Naive thymus-derived CD8-positive, alpha-beta T cell (primary cell): ENCODE measurements at regions of chr11 and their contacts with region 1.

Region 1: GRCh38 chr11:83071567-83072349 is at the start of gene RAB30:
- DNase-seq: peak; percentile 70 to 98 (median 94)
- ATAC-seq: peak; percentile 94 to 95
- H3K4me3 Mint-ChIP-seq: no peak within 1 kb of the TSS
- H3K27ac Mint-ChIP-seq: no peak within 1 kb of the TSS
- H3K4me1 Mint-ChIP-seq: peaks cover 9 to 43% (median 26%) of the 10 kb centered on the region in 4 donors
- H3K27me3 Mint-ChIP-seq: no peaks in the 10 kb centered on the region
- polyA plus RNA-seq, gene RAB30: 10.7 to 17.4 (median 12.8) TPM

Region 2: DNA sequence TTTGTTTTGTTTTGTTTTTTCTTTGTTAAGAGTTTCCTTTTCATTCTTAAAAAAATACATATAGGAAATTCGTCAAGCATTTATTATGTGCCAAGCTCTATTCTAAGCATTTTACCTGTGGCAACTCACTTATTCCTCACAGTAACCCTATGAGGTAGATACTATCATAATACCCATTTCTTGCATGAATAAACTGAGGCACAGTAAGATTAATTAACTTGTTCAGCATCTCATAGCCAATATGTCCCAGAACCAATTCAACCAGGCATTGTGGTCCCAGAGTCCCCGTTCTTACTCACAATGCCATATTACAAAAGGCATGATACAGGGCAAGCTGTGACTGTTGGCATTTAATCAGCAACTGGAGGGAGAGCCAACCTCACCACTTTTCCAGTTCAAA is 83.8 kb before region 1 on chr11:
- POLR2A ChIA-PET with region 1: no interaction called
- DNase-seq: no peak
- ATAC-seq: no peak
- H3K4me3 Mint-ChIP-seq: no peak overlapping the region
- H3K27ac Mint-ChIP-seq: peak overlapping the region in 1 of 10 donors; percentile 25
- H3K4me1 Mint-ChIP-seq: peaks cover 10 to 33% (median 25%) of the 10 kb centered on the region in 4 donors
- H3K27me3 Mint-ChIP-seq: no peaks in the 10 kb centered on the region

Region 3: DNA sequence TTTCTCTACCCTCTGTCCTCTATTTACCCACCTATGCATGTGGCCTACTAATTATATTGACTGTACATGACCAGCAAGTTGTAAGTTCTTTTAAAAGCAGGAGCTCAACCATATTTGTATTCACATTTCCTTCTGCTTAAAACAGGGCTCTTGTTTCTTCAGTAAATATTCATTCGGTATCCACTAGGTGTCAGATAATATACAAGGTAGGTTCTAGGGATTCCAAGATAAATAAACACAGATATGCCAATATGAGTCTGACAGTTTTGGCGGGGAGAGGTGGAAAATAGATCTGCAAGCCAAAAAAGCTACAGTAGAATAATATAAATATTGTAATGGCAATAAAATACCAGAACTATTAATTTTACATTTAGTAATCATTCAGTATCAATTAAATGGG is 15.3 kb after region 1 on chr11:
- POLR2A ChIA-PET with region 1: interaction called, 15 read pairs
- DNase-seq: no peak
- ATAC-seq: peak in 1 of 2 donors; percentile 42
- H3K4me3 Mint-ChIP-seq: no peak overlapping the region
- H3K27ac Mint-ChIP-seq: peak overlapping the region; percentile 1 to 74 (median 49)
- H3K4me1 Mint-ChIP-seq: peaks cover 11 to 31% (median 20%) of the 10 kb centered on the region in 4 donors
- H3K27me3 Mint-ChIP-seq: no peaks in the 10 kb centered on the region

Region 4: DNA sequence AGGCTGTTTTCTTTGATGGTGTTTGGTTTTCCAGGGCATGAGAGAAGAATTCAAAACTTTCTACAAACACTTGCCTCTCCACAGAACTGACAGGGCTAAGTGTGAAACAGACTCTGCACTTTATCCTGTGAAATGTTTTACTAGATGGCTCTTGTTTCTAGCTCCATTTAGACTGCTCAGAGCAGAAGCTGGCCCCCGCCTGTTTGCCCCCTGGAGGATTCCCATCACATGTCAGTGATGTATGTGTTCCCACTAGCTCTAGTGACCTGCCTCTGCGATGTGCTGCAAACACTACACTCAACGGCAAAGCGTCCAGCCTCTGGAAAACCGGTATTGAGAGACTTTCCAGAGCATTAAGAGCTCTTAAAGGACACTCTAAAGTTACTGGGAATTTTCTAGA is 43.8 kb after region 1 on chr11:
- POLR2A ChIA-PET with region 1: no interaction called
- DNase-seq: no peak
- ATAC-seq: no peak
- H3K4me3 Mint-ChIP-seq: peak overlapping the region; percentile 27 to 96 (median 73)
- H3K27ac Mint-ChIP-seq: peak overlapping the region; percentile 15 to 92 (median 58)
- H3K4me1 Mint-ChIP-seq: peaks cover 20 to 60% (median 50%) of the 10 kb centered on the region in 4 donors
- H3K27me3 Mint-ChIP-seq: no peaks in the 10 kb centered on the region